Activated CD8-positive, alpha-beta memory T cell treated with anti-CD3 and anti-CD28 coated beads, Interleukin-2, amount 10 ng/mL, durations not matched to agents 7 days and 5 days (primary cell): ENCODE measurements at regions of chr4 and their contacts with region 1.

Region 1: GRCh38 chr4:38319456-38320342 is 344.3 kb upstream of the KLF3 start:
- DNase-seq: peak; percentile 93
- ATAC-seq: peak; percentile 66
- H3K4me3 Mint-ChIP-seq: peak overlapping the region; percentile 62
- H3K27ac Mint-ChIP-seq: peak overlapping the region; percentile 84
- H3K4me1 Mint-ChIP-seq: peaks cover 30% of the 10 kb centered on the region
- H3K27me3 Mint-ChIP-seq: peaks cover 8% of the 10 kb centered on the region

Region 2: GRCh38 chr4:37977471-37978247 is 342.0 kb before region 1 on chr4:
- CTCF ChIA-PET with region 1: no interaction called
- DNase-seq: peak; percentile 84
- ATAC-seq: peak; percentile 83
- H3K4me3 Mint-ChIP-seq: peak overlapping the region; percentile 77
- H3K27ac Mint-ChIP-seq: peak overlapping the region; percentile 66
- H3K4me1 Mint-ChIP-seq: peaks cover 28% of the 10 kb centered on the region
- H3K27me3 Mint-ChIP-seq: no peaks in the 10 kb centered on the region

Region 3: DNA sequence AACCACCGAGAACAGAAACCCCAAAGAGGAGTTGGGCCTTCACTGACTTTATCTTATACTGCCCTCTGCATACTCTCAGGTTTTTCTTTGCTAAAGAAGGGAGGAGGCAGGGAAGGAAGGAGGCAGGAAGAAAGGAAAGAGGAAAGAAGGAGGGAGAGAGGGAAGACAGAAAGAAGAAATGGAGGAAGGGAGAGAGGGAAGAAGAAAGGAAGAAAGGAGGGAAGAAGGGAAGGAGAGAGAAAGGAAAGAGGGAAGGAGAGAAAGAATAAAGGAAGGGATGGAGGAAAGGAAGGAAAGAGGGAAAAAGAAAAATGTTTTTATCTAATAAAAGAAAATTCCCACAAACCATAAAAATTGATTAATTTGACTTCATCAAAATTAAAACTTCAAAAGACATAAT is 64.9 kb before region 1 on chr4:
- CTCF ChIA-PET with region 1: no interaction called
- DNase-seq: no peak
- ATAC-seq: no peak
- H3K4me3 Mint-ChIP-seq: no peak overlapping the region
- H3K27ac Mint-ChIP-seq: peak overlapping the region; percentile 18
- H3K4me1 Mint-ChIP-seq: no peaks in the 10 kb centered on the region
- H3K27me3 Mint-ChIP-seq: peaks cover 4% of the 10 kb centered on the region

Region 4: DNA sequence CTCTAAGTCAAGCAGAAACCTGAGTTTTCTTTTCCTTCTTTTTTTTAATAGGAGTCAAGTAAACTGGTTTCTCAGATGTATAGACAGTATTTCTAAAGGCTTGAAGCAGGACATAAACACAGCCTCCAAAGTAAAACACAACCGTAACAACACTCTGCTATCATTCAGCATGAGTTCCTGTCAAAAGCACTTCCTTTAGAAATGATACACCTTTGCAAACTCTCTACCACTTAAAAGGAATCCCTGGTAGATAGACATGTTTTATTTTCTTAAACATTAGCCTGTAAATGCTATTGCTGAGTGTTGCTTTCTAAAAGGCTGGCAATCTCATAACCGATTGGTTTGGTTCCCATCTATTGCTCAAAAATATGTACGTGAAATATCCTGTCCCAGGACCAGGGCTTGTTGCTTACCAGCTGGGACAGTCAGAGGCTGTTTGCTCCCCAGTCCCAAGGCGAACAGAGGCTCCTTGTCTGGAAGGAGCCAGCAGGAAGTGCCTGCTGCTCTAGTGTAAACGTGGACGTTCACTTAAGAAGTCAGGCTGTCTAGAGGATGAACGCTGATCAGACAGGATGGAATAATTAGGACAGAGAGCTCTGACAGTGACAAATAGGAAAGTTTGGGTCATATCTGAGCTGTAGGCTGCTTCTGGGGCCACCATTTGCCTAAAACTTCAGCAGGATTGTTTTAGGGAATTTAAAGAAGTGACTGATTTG is 170.4 kb after region 1 on chr4:
- CTCF ChIA-PET with region 1: no interaction called
- DNase-seq: no peak
- ATAC-seq: no peak
- H3K4me3 Mint-ChIP-seq: no peak overlapping the region
- H3K27ac Mint-ChIP-seq: no peak overlapping the region
- H3K4me1 Mint-ChIP-seq: peaks cover 11% of the 10 kb centered on the region
- H3K27me3 Mint-ChIP-seq: peaks cover 3% of the 10 kb centered on the region

Region 5: DNA sequence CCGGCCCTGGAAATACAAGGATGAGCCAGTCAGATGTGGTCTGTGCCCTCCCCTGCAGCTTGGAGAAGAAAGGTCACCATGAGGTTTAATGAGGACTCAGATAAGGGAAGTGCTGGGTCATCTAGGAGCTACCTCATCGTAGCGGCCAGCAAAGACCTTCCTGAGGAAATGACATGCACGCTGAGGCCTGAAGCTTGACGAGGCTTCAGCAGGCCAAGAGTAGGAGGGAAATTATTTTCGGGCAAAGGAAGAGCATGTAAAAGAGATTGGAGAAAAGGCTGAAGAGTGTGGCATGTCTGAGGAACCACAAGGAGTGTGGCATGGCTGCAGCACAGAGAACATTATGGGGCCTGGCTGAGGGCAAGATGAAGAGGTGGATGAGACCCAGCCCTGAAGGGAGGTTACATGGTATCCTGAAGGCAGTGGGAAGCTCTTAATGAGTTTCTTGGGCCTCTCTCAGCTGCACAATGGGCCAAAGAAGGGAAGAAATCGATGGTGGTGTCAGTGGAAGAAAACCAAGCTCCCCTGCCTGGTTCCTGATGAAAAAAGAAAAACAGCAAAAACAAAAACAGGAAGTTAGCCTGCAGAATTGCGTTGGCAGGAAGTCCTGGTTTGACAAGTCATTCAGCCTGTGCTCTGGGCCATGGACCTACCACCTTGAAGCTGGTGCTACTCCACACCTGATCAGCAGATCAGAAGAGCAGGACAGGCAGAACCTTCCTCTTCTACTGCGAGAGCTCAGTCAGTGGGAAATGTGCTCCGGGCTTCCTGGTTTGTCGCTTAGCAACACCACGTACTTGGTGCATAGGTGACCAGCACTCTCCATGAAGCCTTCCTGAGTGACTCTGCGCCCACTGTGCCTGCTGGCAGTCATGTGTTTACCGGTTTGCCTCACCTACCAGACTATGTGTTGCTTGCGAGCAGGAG is 209.8 kb after region 1 on chr4:
- CTCF ChIA-PET with region 1: interaction called, 11 read pairs
- DNase-seq: peak; percentile 65
- ATAC-seq: peak; percentile 93
- H3K4me3 Mint-ChIP-seq: no peak overlapping the region
- H3K27ac Mint-ChIP-seq: peak overlapping the region; percentile 88
- H3K4me1 Mint-ChIP-seq: peaks cover 23% of the 10 kb centered on the region
- H3K27me3 Mint-ChIP-seq: peaks cover 45% of the 10 kb centered on the region

Region 6: DNA sequence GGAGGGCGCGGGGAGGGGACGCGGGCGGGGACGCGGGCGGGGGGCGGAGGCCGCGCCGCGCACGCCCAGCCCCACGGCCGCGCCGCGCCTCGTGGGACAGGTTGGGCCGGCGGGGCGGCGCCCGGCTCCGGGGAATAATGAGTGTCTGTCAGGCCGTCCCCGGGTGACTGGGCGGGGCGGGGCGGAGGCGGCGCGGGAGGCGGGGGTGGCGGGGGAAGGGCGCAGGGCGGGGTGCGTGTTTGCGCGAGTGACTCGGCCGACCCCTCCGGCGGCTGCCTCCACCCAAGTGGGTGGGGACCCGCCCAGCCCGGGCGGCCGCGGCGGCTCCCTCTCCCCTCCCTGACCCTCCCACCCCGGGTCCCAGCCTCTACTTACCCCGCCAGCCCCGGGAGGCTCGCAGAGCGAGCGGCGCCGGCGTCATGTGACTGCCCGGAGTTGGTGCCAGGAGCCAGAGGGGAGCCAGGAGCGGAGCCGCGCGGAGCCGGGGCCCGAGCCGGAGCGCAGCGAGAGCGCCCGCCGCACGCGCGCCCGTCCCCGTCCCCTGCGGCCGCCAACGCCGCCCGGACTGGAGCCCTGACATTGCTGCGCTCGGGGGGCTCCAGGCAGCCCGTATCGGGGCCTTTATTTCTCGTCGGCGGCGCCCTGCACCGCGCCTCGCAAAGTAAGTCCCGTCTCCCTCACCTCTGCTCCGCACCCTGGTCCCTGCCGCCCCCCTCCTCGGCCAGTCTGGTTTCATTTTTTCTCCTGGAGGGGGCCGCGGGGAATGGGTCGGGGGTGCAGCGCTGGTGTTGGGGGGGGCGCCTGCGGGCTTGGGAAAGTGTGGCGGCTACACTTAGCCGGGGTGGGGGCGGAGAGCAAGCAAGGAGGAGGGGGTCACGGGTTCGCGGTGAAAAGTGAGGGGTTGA is 344.4 kb after region 1 on chr4 and contains the start of gene KLF3:
- CTCF ChIA-PET with region 1: interaction called, 21 read pairs
- DNase-seq: peak; percentile 84
- ATAC-seq: peak; percentile 87
- H3K4me3 Mint-ChIP-seq: peak within 1 kb of the TSS; percentile 73
- H3K27ac Mint-ChIP-seq: peak within 1 kb of the TSS; percentile 61
- H3K4me1 Mint-ChIP-seq: peaks cover 34% of the 10 kb centered on the region
- H3K27me3 Mint-ChIP-seq: peaks cover 50% of the 10 kb centered on the region
- total RNA-seq, gene KLF3: 2.6 to 3.5 TPM

Region 7: DNA sequence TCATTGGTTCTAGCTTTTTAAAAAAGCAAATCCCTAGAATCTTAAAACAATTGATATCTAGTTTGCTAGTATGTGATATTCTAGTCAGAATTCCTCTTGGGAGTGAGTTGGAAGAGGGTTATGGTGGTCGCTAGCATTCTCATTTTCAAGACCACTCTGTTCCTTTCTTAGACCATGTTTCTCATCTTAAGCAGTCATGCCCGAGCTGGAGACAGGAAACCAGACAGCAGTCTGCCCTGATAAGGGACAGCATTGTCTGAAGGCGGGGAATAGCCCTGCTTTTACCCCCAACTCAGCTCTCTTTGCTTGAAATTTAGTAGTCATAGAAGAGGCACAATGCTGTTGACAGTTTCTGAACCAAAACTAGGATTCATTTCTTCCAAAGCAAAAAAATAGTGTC is 349.5 kb after region 1 on chr4:
- CTCF ChIA-PET with region 1: interaction called, 64 read pairs
- DNase-seq: no peak
- ATAC-seq: no peak
- H3K4me3 Mint-ChIP-seq: no peak overlapping the region
- H3K27ac Mint-ChIP-seq: no peak overlapping the region
- H3K4me1 Mint-ChIP-seq: peaks cover 39% of the 10 kb centered on the region
- H3K27me3 Mint-ChIP-seq: peaks cover 36% of the 10 kb centered on the region

Region 8: GRCh38 chr4:38675146-38676121 is 355.7 kb after region 1 on chr4:
- CTCF ChIA-PET with region 1: interaction called, 64 read pairs
- DNase-seq: peak; percentile 86
- ATAC-seq: peak; percentile 81
- H3K4me3 Mint-ChIP-seq: no peak overlapping the region
- H3K27ac Mint-ChIP-seq: no peak overlapping the region
- H3K4me1 Mint-ChIP-seq: peaks cover 31% of the 10 kb centered on the region
- H3K27me3 Mint-ChIP-seq: no peaks in the 10 kb centered on the region

Region 9: GRCh38 chr4:38717604-38718003 is 397.9 kb after region 1 on chr4:
- CTCF ChIA-PET with region 1: no interaction called
- DNase-seq: no peak
- ATAC-seq: no peak
- H3K4me3 Mint-ChIP-seq: no peak overlapping the region
- H3K27ac Mint-ChIP-seq: no peak overlapping the region
- H3K4me1 Mint-ChIP-seq: no peaks in the 10 kb centered on the region
- H3K27me3 Mint-ChIP-seq: peaks cover 40% of the 10 kb centered on the region

Region 10: DNA sequence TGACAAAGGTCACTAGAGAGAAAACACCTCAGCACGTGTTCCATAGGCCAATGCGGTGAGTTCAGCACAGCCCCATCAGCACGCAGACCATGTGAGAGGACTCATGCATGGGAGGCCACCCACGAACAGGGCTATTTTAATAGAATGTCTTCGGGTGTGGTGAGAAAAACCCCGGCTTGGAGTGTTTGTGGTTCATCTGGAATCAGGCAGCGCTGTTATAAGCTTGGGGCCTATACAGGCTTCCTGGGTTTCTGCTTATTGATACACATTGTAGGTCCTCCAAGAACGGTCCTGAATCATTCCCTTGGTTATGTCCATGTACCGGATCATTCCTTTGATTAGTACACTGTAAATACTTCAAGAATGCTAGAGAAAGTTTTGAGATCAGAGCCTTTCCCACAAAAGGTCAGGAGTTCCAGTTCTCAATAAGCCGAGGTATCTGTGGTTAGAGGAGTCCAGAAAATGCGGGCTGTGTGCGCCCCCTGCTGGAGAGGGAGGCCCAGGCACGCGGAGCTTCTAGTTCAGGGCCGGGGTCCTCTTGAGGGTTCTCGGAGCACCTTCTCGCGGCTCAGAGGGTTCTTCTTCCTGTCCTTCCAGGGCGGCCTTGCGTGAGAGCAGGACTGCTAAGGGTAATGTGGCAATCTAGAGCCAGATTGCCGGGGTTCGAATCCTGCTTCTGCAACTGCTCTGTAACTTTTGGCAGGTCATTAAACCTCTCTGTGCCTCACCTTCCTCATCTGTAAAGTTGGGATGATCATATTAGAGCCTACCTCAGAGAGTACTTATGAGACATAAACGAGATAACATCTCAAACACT is 411.3 kb after region 1 on chr4:
- CTCF ChIA-PET with region 1: interaction called, 13 read pairs
- DNase-seq: peak; percentile 77
- ATAC-seq: peak; percentile 64
- H3K4me3 Mint-ChIP-seq: no peak overlapping the region
- H3K27ac Mint-ChIP-seq: no peak overlapping the region
- H3K4me1 Mint-ChIP-seq: peaks cover 10% of the 10 kb centered on the region
- H3K27me3 Mint-ChIP-seq: peaks cover 32% of the 10 kb centered on the region